Activated CD4-positive, alpha-beta memory T cell treated with anti-CD3 and anti-CD28 coated beads, Interleukin-2, amount 10 ng/mL, durations not matched to agents 7 days and 5 days (primary cell): ENCODE measurements at regions of chr10 and their contacts with region 1.

Region 1: GRCh38 chr10:100743626-100744135 is 1.7 kb upstream of the PAX2 start:
- DNase-seq: peak; percentile 62
- H3K4me3 Mint-ChIP-seq: no peak overlapping the region
- H3K27ac Mint-ChIP-seq: no peak overlapping the region
- H3K4me1 Mint-ChIP-seq: peaks cover 26% of the 10 kb centered on the region
- H3K27me3 Mint-ChIP-seq: peaks cover 85% of the 10 kb centered on the region

Region 2: DNA sequence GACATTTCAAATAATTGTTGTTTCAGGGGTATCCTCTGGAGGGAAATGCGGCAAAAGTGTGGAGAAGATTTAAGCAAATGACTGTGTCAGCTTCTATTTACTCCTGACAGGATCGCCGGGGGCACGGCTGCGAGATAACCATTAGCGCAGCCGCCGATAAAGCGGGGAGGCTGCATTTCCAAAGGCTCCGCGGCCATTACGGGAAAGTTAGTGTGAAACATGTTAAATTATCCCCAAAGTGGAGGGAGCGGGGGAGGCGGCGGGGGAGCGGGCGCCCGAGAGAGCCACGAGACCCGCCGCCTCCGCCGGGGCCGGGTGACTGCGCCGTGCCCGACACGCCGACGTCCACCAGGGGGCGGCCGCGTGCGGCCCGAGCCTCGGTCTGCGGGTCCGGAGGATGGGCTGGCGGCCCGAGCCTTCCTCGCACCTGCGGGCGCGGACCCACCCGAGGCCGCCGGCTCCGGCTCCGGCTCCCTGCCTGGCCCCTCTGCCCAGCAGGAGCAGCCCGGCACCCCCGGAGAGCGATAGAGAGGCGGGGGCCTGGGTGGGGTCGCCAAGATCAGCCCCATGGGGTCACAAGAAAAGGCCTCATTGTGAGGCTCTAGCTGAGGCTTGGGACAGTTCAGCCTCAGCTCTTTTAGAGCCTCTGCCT is 72.7 kb before region 1 on chr10:
- CTCF ChIA-PET with region 1: interaction called, 11 read pairs
- POLR2A ChIA-PET with region 1: no interaction called
- DNase-seq: peak; percentile 67
- H3K4me3 Mint-ChIP-seq: no peak overlapping the region
- H3K27ac Mint-ChIP-seq: no peak overlapping the region
- H3K4me1 Mint-ChIP-seq: peaks cover 6% of the 10 kb centered on the region
- H3K27me3 Mint-ChIP-seq: peaks cover 59% of the 10 kb centered on the region

Region 3: DNA sequence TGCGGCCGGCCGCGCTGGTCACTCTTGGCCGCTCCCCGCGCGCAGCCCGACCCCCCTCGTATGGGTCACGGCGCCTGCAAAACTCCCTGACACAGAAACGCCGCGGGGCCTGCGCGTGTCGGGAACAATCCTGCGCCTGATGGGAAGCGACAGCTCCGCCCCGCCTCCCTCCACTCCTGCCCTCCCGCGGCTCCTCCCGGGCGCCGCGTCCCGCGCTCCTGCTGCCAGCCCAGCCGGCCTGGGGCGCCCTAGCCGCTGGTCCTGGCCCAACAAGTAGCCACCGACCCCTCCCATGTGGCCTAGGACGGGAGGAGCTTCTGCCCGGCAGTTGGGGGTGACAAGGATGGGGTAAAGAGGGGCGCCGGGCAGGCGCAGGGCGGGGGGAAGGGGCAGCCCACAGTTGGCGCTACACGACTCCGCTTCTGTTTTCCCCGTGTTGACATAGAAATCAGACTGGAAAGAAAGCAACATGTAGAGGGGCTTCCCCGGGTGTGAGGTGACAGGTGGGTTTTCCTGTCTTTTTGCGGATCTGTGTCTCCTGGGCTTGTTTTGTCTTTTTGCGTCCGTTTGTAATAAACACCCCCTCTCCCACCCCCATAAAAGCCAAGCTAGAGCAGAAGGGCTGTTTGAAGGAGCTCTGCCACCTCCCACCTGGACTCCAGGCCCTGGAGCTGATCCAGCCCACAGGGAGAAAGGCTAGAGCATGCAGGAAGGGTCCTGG is 33.4 kb before region 1 on chr10:
- CTCF ChIA-PET with region 1: no interaction called
- POLR2A ChIA-PET with region 1: no interaction called
- DNase-seq: no peak
- H3K4me3 Mint-ChIP-seq: no peak overlapping the region
- H3K27ac Mint-ChIP-seq: no peak overlapping the region
- H3K4me1 Mint-ChIP-seq: peaks cover 3% of the 10 kb centered on the region
- H3K27me3 Mint-ChIP-seq: peaks cover 75% of the 10 kb centered on the region

Region 4: DNA sequence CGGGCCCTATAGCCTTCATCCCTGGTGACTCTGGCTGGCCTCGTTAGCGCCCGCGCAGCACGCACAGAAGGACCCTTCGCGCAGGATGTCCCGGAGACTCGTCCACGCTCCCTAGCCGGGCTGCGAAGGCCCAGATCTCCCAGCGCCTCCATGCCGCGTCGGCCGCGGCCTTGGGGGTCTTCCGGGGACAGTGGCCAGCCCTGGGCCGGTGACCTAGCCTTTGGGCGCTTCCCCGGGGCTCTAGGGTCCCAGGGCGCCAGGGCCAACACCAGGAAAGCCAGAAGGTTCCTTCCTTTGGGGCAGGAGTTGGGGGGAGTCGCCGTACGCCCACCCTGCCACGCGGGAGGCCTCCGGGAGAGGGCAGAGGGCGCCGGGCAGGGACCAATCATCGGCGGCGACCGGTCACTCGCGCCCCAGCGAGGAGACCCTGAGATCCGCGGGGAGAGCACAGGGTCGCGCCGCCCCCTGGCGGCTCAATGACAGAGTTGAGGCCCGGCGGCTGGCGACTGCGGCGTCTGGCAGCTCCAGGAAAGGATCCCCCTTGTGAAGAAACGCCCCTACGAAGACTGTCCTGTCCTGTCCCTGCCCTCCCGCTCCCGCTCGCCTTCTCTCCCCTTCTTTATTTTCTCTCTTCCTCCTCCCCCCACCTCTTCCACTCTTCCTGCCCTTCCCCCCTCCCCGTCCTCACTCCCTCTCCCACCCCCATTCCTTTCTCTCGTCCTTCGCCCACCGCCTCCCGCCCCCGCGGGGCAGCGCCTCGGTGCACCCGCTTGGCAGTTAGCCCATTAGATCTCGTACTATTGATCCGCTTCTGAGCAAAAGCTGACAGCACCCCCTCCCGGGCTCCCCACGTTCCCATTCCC is 547.9 kb after region 1 on chr10:
- CTCF ChIA-PET with region 1: no interaction called
- POLR2A ChIA-PET with region 1: no interaction called
- DNase-seq: peak; percentile 33
- H3K4me3 Mint-ChIP-seq: peak overlapping the region; percentile 24
- H3K27ac Mint-ChIP-seq: no peak overlapping the region
- H3K4me1 Mint-ChIP-seq: peaks cover 6% of the 10 kb centered on the region
- H3K27me3 Mint-ChIP-seq: peaks cover 72% of the 10 kb centered on the region